ENCODE measurements at regions of chr2 and their contacts with region 1.

Region 1: GRCh38 chr2:46984642-46985476 is 69.3 kb upstream of the MCFD2 start:
- DNase-seq: peak; percentile 62
- H3K4me3 Mint-ChIP-seq: peak overlapping the region; percentile 64
- H3K27ac Mint-ChIP-seq: peak overlapping the region; percentile 93
- H3K4me1 Mint-ChIP-seq: peaks cover 54% of the 10 kb centered on the region
- H3K27me3 Mint-ChIP-seq: no peaks in the 10 kb centered on the region

Region 2: GRCh38 chr2:46917628-46918027 is 67.2 kb before region 1 on chr2:
- intact Hi-C with region 1: loop called (anchors 1 kb)
- DNase-seq: no peak
- H3K4me3 Mint-ChIP-seq: peak overlapping the region; percentile 98
- H3K27ac Mint-ChIP-seq: no peak overlapping the region
- H3K4me1 Mint-ChIP-seq: peaks cover 53% of the 10 kb centered on the region
- H3K27me3 Mint-ChIP-seq: no peaks in the 10 kb centered on the region

Region 3: GRCh38 chr2:46929612-46930011 is 55.2 kb before region 1 on chr2:
- intact Hi-C with region 1: no loop called
- DNase-seq: no peak
- H3K4me3 Mint-ChIP-seq: no peak overlapping the region
- H3K27ac Mint-ChIP-seq: no peak overlapping the region
- H3K4me1 Mint-ChIP-seq: peaks cover 3% of the 10 kb centered on the region
- H3K27me3 Mint-ChIP-seq: no peaks in the 10 kb centered on the region

Region 4: DNA sequence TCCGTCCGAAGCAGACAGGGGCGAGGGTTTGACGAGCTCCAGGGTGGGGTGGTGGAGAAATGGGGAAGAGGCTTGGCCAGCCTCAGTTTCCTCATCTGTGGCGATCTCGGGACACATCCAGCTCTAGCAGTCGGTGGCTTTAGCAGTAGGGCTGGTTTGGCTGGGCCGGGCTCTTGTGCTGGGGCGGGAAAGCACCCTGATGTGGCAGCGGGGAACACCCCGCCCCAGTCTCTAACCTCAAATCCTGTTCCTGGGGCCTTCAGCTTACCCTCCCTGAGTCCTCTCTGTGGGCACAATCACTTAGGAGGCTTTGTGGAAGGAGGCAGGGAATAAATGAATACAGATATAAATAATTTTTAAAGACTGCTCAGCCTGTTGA is 42.7 kb before region 1 on chr2:
- intact Hi-C with region 1: loop called (anchors 1 kb)
- DNase-seq: peak; percentile 69
- H3K4me3 Mint-ChIP-seq: peak overlapping the region; percentile 99
- H3K27ac Mint-ChIP-seq: peak overlapping the region; percentile 99
- H3K4me1 Mint-ChIP-seq: peaks cover 46% of the 10 kb centered on the region
- H3K27me3 Mint-ChIP-seq: no peaks in the 10 kb centered on the region

Region 5: DNA sequence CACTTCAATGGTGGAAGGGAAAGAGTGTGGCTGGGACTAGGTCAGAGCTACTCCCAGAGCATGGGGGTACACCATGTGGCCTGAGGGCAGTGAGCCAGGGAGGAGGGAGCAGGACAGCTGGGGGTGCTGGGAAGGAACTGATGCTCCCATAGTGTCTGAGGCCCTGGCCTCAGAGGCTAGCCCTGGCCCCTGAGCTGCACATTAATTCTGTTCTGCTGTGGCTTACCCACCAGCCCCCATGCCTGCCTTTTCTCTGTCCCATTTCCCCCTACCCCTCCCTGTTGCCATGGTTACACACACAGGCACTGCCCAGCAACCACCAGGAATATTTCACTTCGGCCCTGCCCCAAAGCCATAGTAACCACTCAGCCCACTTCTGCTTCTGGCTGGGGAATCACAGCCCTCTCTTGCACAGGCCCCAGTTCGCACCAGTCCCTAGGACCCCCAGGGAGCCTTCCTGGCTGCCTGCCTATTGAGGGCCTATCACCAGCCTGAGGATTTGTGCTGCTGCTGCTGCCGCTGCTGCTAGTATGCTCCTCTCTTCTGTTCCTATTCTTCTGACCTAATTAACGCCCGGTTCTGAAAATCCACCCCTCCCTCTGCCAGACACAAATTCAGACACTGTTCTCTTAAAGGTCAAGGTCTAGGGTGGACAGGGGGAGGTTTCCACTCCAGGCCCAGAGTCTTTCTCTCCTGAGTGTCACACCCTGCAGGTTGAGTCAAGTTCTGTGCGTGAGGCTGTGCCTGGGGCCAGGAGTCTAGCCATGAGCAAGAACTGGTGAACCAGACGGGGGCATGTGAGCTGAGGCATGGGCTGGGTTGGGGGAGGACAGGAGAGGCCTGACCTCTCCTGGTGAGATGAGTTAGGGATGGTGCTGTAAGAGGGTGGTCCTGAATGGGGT is 17.9 kb after region 1 on chr2:
- intact Hi-C with region 1: no loop called
- DNase-seq: no peak
- H3K4me3 Mint-ChIP-seq: no peak overlapping the region
- H3K27ac Mint-ChIP-seq: peak overlapping the region; percentile 66
- H3K4me1 Mint-ChIP-seq: peaks cover 3% of the 10 kb centered on the region
- H3K27me3 Mint-ChIP-seq: no peaks in the 10 kb centered on the region